ENCODE measurements at regions of chr1 and their contacts with region 1.

Region 1: DNA sequence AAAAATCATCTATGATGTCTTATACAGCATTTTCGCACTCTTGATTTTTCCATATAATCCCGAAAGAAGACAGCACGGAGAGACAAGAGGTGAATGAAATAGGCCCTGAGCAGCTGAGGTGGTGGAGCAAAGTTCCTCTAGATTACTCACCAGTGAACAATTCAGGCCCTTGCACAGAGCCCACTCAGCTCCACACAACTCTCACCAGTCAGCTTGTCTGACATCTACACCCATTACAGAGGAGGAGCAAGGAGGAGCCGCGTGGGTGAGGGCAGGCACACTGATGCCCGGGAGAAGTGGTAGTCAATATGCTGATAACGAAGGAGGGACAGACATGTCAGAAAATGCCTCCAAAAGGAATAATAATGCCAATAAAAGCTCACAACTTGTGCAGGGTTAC is 59.9 kb downstream of the DNM3 start:
- DNase-seq: no peak
- H3K4me3 ChIP-seq: no peak overlapping the region
- H3K27ac ChIP-seq: no peak overlapping the region
- H3K4me1 ChIP-seq: peaks cover 32% of the 10 kb centered on the region
- H3K27me3 ChIP-seq: no peaks in the 10 kb centered on the region
- CTCF ChIP-seq: no peak

Region 2: GRCh38 chr1:171841050-171841940 is 60.0 kb before region 1 on chr1 and contains the start of gene DNM3:
- CTCF ChIA-PET with region 1: no interaction called
- dilution Hi-C with region 1: no loop called
- in situ Hi-C with region 1: no loop called
- intact Hi-C with region 1: loop called (anchors 2 kb)
- DNase-seq: peak; percentile 72
- H3K4me3 ChIP-seq: peak within 1 kb of the TSS; percentile 71 to 100 (median 86)
- H3K27ac ChIP-seq: peak within 1 kb of the TSS; percentile 35
- H3K4me1 ChIP-seq: peaks cover 14% of the 10 kb centered on the region
- H3K27me3 ChIP-seq: no peaks in the 10 kb centered on the region
- CTCF ChIP-seq: no peak
- total RNA-seq, gene DNM3: 3.0 to 6.4 TPM

Region 3: DNA sequence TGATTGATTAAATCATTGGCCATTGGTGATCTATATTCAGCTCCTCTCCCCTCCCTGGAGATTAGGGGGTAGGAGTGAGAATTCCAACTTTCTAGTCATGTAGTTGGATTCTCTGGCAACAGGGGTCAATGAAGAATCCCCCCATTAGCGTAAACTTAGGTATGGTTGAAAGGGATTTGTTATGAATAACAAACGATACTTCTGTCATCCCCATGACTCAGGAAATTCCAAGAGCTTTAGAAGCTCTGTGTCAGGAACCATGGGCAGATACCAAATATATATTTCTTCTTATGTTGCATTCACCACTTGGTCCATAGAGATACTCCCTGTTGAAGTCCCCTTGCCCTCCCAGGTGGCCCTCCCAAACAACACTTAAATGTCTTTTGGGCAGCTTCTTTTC is 64.5 kb after region 1 on chr1:
- CTCF ChIA-PET with region 1: no interaction called
- dilution Hi-C with region 1: no loop called
- in situ Hi-C with region 1: no loop called
- intact Hi-C with region 1: no loop called
- DNase-seq: peak; percentile 30
- H3K4me3 ChIP-seq: no peak overlapping the region
- H3K27ac ChIP-seq: no peak overlapping the region
- H3K4me1 ChIP-seq: peaks cover 16% of the 10 kb centered on the region
- H3K27me3 ChIP-seq: no peaks in the 10 kb centered on the region
- CTCF ChIP-seq: no peak

Measured in mammary epithelial cell (primary cell).